Activated CD4-positive, alpha-beta memory T cell treated with anti-CD3 and anti-CD28 coated beads, Interleukin-2, amount 10 ng/mL, durations not matched to agents 7 days and 5 days (primary cell): ENCODE measurements at regions of chr22 and their contacts with region 1.

Region 1: DNA sequence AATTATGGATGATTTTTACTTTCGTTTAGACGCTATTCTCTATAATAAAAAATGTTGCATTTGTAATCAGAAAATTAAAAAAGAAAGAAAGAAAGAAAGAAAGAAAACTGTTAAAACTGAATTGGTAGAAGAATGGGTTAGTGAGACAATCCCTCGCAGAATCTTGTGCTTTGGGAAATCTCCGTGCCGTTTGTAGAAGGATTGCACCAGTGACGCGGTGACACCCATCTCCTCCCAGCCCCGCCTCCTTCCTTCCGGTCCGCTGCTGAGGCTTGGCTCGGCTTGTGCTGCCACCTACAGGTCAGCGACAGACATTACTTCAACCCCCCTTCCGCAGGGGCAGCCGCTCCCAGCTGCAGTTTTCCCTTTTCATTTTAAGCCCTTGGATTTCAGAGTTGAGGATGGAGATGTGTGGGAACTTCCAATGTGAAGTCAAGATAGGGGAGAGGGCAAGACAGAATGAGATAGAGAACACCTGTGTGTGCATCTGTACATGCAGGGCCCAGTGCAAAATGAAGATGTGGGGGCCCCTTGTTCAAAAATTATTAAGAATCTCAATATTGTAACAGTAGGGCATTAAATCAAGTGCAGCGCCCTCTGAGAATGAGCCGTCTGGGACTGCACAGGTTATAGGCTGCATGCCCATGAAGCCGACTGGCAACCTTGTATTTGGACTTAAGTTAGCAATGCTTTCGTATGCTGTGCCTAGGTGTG is 41.1 kb downstream of the TST start:
- DNase-seq: peak; percentile 92
- H3K4me3 Mint-ChIP-seq: peak overlapping the region; percentile 82
- H3K27ac Mint-ChIP-seq: peak overlapping the region; percentile 81
- H3K4me1 Mint-ChIP-seq: peaks cover 17% of the 10 kb centered on the region
- H3K27me3 Mint-ChIP-seq: peaks cover 9% of the 10 kb centered on the region

Region 2: GRCh38 chr22:36775964-36776669 is 202.0 kb before region 1 on chr22 and contains the start of gene IFT27:
- CTCF ChIA-PET with region 1: interaction called, 28 read pairs
- POLR2A ChIA-PET with region 1: interaction called, 6 read pairs
- DNase-seq: peak; percentile 98
- H3K4me3 Mint-ChIP-seq: peak within 1 kb of the TSS; percentile 85
- H3K27ac Mint-ChIP-seq: peak within 1 kb of the TSS; percentile 77
- H3K4me1 Mint-ChIP-seq: peaks cover 34% of the 10 kb centered on the region
- H3K27me3 Mint-ChIP-seq: no peaks in the 10 kb centered on the region
- total RNA-seq, gene IFT27: 28.3 to 29.5 TPM

Region 3: GRCh38 chr22:36856121-36856791 is 121.8 kb before region 1 on chr22:
- CTCF ChIA-PET with region 1: interaction called, 80 read pairs
- POLR2A ChIA-PET with region 1: interaction called, 9 read pairs
- DNase-seq: peak; percentile 94
- H3K4me3 Mint-ChIP-seq: peak overlapping the region; percentile 44
- H3K27ac Mint-ChIP-seq: peak overlapping the region; percentile 55
- H3K4me1 Mint-ChIP-seq: peaks cover 62% of the 10 kb centered on the region
- H3K27me3 Mint-ChIP-seq: no peaks in the 10 kb centered on the region

Region 4: DNA sequence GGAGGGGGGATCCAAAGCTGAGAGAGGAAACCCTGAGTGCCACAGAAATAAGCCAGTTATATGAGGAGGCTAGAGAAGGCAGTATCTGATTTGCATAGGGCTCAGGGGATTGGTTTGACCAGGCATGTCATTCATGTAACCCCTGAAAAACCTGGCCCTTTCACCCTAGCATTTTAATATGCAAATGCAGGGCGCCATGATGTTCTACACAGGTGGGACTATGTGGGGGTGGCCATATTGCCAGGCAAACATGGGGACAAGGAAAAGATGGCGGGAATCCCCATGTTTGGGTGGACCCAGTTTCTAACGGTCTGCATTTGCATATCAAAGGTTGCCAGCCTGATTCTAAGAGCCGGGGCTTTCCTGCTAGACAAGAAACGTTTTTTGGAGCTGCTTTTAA is 37.4 kb before region 1 on chr22:
- CTCF ChIA-PET with region 1: no interaction called
- POLR2A ChIA-PET with region 1: no interaction called
- DNase-seq: no peak
- H3K4me3 Mint-ChIP-seq: no peak overlapping the region
- H3K27ac Mint-ChIP-seq: no peak overlapping the region
- H3K4me1 Mint-ChIP-seq: peaks cover 7% of the 10 kb centered on the region
- H3K27me3 Mint-ChIP-seq: peaks cover 7% of the 10 kb centered on the region

Region 5: DNA sequence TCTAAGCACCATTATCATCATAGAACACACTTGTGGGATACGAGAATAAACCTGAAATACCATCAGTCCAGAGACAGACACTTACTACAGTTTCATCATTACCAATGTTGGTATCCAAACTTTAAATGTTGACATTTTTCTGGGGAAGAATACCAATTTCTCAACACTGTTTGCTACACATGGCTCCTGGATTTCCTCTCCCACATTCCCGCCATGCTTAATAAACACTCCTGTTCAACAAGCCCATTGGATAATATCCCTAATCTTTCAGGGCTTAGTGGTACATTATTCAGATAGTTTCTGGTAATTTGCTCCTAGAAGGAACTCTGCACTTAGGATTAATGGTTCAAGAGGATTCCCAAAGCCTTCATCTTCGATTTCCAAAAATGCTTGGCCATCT is 16.5 kb before region 1 on chr22:
- CTCF ChIA-PET with region 1: interaction called, 12 read pairs
- POLR2A ChIA-PET with region 1: no interaction called
- DNase-seq: no peak
- H3K4me3 Mint-ChIP-seq: no peak overlapping the region
- H3K27ac Mint-ChIP-seq: no peak overlapping the region
- H3K4me1 Mint-ChIP-seq: no peaks in the 10 kb centered on the region
- H3K27me3 Mint-ChIP-seq: peaks cover 22% of the 10 kb centered on the region

Region 6: DNA sequence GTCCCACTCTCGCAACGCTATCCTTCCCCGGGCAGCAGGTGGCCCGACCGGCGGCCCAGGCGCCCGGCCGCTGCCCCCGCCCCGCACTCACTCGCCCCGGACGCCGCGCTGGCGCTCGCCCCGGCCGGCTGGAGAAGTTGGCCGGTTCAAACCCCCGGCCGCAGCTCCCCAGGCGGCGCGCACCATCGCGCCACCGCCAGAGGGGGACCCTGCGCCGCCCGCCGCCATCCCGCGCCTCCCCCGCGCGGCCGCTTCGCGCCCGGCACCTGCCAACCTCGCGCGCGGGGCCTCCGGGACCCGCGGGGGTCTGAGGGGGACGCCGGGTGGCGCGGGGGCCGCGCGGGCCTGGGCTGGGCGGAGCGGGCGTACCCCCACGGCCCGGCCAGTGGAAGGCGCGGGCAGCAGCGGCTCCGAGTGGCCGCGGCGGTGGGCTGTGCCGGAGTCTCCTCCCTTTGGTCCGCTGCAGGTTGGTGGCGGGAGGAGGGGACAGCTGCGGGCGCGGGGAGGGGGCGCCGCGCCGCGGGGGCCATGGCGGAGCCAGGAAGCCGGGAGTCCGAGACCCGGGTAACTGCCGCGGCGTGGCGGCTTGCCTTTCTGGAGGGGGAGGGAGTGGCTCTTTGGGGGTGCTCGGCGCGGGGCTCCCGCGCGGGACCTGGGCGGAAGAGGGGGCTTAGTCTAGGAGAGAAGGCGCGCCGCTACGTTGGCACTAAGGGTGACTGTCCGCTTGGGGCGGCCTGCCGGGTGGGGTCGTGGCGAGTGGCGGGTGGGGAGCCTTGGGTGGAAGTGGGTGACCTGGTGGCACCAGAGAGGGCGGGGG is 41.4 kb after region 1 on chr22 and contains the starts of genes MPST and TST:
- CTCF ChIA-PET with region 1: interaction called, 14 read pairs
- POLR2A ChIA-PET with region 1: interaction called, 4 read pairs
- DNase-seq: peak; percentile 63
- H3K4me3 Mint-ChIP-seq: peak within 1 kb of the TSS; percentile 90
- H3K27ac Mint-ChIP-seq: peak within 1 kb of the TSS; percentile 74
- H3K4me1 Mint-ChIP-seq: peaks cover 20% of the 10 kb centered on the region
- H3K27me3 Mint-ChIP-seq: no peaks in the 10 kb centered on the region
- total RNA-seq, gene MPST: 29.6 to 32.7 TPM
- total RNA-seq, gene TST: 7.2 to 8.3 TPM